ENCODE measurements at regions of chr6 and their contacts with region 1.

Region 1: DNA sequence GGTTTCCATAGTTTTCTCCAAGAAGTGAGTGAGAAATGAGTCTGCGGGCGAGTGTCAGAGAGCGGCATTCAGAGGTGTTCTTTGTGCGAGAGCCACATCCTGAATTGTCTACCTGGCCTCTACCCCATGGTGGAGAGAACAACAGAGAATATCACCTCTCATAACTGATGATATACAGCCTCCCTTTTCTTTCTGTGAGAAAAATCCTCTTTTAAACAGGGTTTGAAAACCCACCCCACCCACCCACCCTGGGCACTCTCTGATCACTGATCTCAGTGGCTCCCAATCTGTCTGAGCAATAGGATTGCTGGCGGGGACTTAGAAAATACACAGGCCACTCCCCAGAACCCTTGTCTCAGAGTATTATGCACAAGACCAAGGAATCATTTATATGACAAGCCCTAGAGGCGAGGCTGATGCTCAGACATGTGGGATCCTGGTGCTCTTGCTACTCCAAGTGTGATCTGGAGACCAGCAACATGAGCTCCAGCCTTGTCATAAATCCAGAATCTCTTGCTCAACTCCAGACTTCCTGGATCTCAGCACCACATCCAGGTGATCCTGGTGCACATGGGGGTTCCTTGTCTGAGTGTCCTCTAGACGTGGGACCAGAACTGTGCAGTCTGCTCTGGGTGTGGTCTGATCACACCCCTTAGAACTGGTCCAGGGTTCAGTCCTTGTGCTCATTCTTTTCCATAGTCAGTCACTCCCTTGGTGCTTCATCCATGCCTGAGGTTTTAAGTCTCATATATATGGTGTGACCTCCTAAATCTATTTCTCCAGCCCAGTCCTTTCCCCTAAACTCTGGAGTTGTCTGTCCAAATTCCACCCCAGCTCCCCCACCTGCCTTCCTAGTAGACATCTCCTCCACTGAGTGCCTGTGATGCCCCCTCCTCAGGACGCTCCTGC is 5.3 kb downstream of the HLA-B start:
- DNase-seq: no peak
- H3K4me3 ChIP-seq: no peak overlapping the region
- H3K27ac ChIP-seq: no peak overlapping the region
- H3K27me3 ChIP-seq: no peaks in the 10 kb centered on the region
- CTCF ChIP-seq: no peak

Region 2: GRCh38 chr6:31222496-31222895 is 129.2 kb before region 1 on chr6:
- intact Hi-C with region 1: loop called in 1 of 2 experiments (anchors 5 kb)
- DNase-seq: no peak
- H3K4me3 ChIP-seq: no peak overlapping the region
- H3K27ac ChIP-seq: no peak overlapping the region
- H3K27me3 ChIP-seq: peaks cover 0 to 4% (median 0%) of the 10 kb centered on the region in 45 donors
- CTCF ChIP-seq: no peak

Measured in dorsolateral prefrontal cortex (tissue), 120 donors.